IMR-90 (cell line): ENCODE measurements at regions of chr17 and their contacts with region 1.

Region 1: GRCh38 chr17:58006924-58007780 is at the start of gene SRSF1:
- DNase-seq: peak; percentile 98
- ATAC-seq: peak; percentile 93
- H3K4me3 ChIP-seq: peak within 1 kb of the TSS; percentile 63
- H3K27ac ChIP-seq: peak within 1 kb of the TSS; percentile 93
- H3K4me1 ChIP-seq: 0 out of 2 replicates have a peak, but pooled peaks cover 2% of the 10 kb centered on the region
- H3K27me3 ChIP-seq: no peaks in the 10 kb centered on the region
- CTCF ChIP-seq: no peak
- POLR2A ChIP-seq: peak; percentile 96
- RAD21 ChIP-seq: no peak
- total RNA-seq, gene SRSF1: 357 and 513 TPM in 2 replicates

Region 2: GRCh38 chr17:57121338-57122042 is 885.7 kb before region 1 on chr17:
- CTCF ChIA-PET with region 1: no interaction called
- POLR2A ChIA-PET with region 1: no interaction called
- dilution Hi-C with region 1: no loop called
- in situ Hi-C with region 1: loop called (anchors 10 kb)
- intact Hi-C with region 1: no loop called
- DNase-seq: peak; percentile 36
- ATAC-seq: peak; percentile 90
- H3K4me3 ChIP-seq: no peak overlapping the region
- H3K27ac ChIP-seq: no peak overlapping the region
- H3K4me1 ChIP-seq: no peaks in the 10 kb centered on the region
- H3K27me3 ChIP-seq: no peaks in the 10 kb centered on the region
- CTCF ChIP-seq: peak; percentile 52
- POLR2A ChIP-seq: no peak
- RAD21 ChIP-seq: peak; percentile 36

Region 3: DNA sequence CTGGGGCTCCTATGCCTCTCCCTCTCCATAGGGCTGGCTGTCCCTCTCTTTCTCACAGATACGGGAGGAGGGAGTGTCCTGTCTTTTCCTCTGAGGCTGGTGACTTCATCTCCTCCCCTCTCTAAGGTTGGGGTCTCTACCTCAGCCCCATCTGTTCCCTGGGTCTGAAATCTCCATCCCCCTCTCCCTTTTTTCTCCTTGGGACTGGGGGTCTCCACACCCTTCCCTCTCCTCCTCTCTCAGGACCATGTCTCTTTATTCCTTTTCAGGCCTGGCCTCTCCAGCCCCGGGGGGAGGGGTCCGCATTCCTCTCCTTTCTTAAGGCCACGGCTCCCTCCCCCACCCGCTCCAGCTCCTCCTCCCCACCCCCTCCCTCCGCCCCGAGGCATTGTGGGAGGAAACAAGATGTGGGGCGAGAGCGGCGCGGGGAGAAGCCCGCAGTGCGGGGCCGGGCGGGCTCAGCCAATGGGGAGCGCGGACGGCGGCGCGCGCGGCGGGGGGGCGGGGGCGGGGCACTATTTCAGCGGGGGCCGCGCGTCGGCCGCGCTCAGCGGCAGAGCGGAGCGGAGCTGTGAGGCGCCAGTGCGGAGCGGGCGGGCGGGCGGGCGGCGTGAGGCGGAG is 75.8 kb after region 1 on chr17 and contains the start of gene DYNLL2:
- CTCF ChIA-PET with region 1: no interaction called
- POLR2A ChIA-PET with region 1: interaction called, 6 read pairs
- dilution Hi-C with region 1: no loop called
- in situ Hi-C with region 1: loop called (anchors 5 kb)
- intact Hi-C with region 1: loop called (anchors 1 kb)
- DNase-seq: peak; percentile 85
- ATAC-seq: peak; percentile 94
- H3K4me3 ChIP-seq: peak within 1 kb of the TSS; percentile 74
- H3K27ac ChIP-seq: peak within 1 kb of the TSS; percentile 88
- H3K4me1 ChIP-seq: peaks cover 13% of the 10 kb centered on the region
- H3K27me3 ChIP-seq: peaks cover 10% of the 10 kb centered on the region
- CTCF ChIP-seq: no peak
- POLR2A ChIP-seq: peak; percentile 87
- RAD21 ChIP-seq: no peak
- total RNA-seq, gene DYNLL2: 9.1 and 12.8 TPM in 2 replicates

Region 4: GRCh38 chr17:58488428-58488890 is 481.3 kb after region 1 on chr17:
- CTCF ChIA-PET with region 1: no interaction called
- POLR2A ChIA-PET with region 1: interaction called, 10 read pairs
- dilution Hi-C with region 1: no loop called
- in situ Hi-C with region 1: no loop called
- intact Hi-C with region 1: no loop called
- DNase-seq: no peak
- ATAC-seq: no peak
- H3K4me3 ChIP-seq: no peak overlapping the region
- H3K27ac ChIP-seq: no peak overlapping the region
- H3K4me1 ChIP-seq: no peaks in the 10 kb centered on the region
- H3K27me3 ChIP-seq: no peaks in the 10 kb centered on the region
- CTCF ChIP-seq: no peak
- POLR2A ChIP-seq: no peak
- RAD21 ChIP-seq: no peak